ENCODE measurements at regions of chr18 and their contacts with region 1.

Region 1: GRCh38 chr18:74342416-74343043 is 26.9 kb downstream of the C18orf63 start:
- DNase-seq: peak; percentile 39
- ATAC-seq: no peak
- H3K4me3 Mint-ChIP-seq: no peak overlapping the region
- H3K27ac Mint-ChIP-seq: no peak overlapping the region
- H3K4me1 Mint-ChIP-seq: no peaks in the 10 kb centered on the region
- H3K27me3 Mint-ChIP-seq: peaks cover 7% of the 10 kb centered on the region

Region 2: GRCh38 chr18:74040459-74041332 is 301.8 kb before region 1 on chr18:
- CTCF ChIA-PET with region 1: no interaction called
- POLR2A ChIA-PET with region 1: no interaction called
- intact Hi-C with region 1: loop called (anchors 2 to 10 kb)
- DNase-seq: peak; percentile 86
- ATAC-seq: peak; percentile 98
- H3K4me3 Mint-ChIP-seq: no peak overlapping the region
- H3K27ac Mint-ChIP-seq: no peak overlapping the region
- H3K4me1 Mint-ChIP-seq: no peaks in the 10 kb centered on the region
- H3K27me3 Mint-ChIP-seq: no peaks in the 10 kb centered on the region

Region 3: GRCh38 chr18:74196220-74197119 is 146.1 kb before region 1 on chr18:
- CTCF ChIA-PET with region 1: interaction called, 30 read pairs
- POLR2A ChIA-PET with region 1: no interaction called
- intact Hi-C with region 1: loop called (anchors 1 kb)
- DNase-seq: peak; percentile 57
- ATAC-seq: peak; percentile 90
- H3K4me3 Mint-ChIP-seq: peak overlapping the region; percentile 32
- H3K27ac Mint-ChIP-seq: no peak overlapping the region
- H3K4me1 Mint-ChIP-seq: peaks cover 4% of the 10 kb centered on the region
- H3K27me3 Mint-ChIP-seq: peaks cover 3% of the 10 kb centered on the region

Region 4: DNA sequence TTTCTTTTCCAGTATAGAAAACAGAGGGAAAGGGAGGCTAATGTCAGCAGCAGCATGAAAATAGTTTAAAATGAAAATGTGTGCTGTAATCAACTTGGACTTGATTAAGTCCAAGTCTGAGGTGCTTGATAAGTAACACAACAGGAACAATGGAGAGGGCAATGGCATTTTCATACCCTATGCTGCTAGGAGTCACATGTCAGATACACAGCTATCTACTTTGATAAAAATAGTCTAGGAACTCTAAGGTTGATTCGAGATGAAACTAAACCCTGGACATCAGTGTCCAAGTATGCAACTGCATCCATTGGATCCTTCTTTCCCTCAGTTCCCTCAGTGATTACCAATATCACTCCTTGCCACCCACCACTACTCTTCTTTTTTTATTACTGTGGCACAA is 31.5 kb before region 1 on chr18:
- CTCF ChIA-PET with region 1: interaction called, 10 read pairs
- POLR2A ChIA-PET with region 1: no interaction called
- intact Hi-C with region 1: no loop called
- DNase-seq: no peak
- ATAC-seq: no peak
- H3K4me3 Mint-ChIP-seq: no peak overlapping the region
- H3K27ac Mint-ChIP-seq: no peak overlapping the region
- H3K4me1 Mint-ChIP-seq: peaks cover 3% of the 10 kb centered on the region
- H3K27me3 Mint-ChIP-seq: peaks cover 25% of the 10 kb centered on the region